GM12878 (cell line): ENCODE measurements at regions of chr20 and their contacts with region 1.

Region 1: GRCh38 chr20:36199345-36200257 is 36.7 kb upstream of the AAR2 start:
- DNase-seq: no peak
- ATAC-seq: peak; percentile 91
- H3K4me3 ChIP-seq: no peak overlapping the region
- H3K27ac ChIP-seq: no peak overlapping the region
- H3K4me1 ChIP-seq: no peaks in the 10 kb centered on the region
- H3K27me3 ChIP-seq: peaks cover 0 to 7% of the 10 kb centered on the region in 2 experiments; a peak in 3 of 4 replicates
- CTCF ChIP-seq: peak; percentile 87 to 94 (median 92)
- EP300 ChIP-seq: no peak
- POLR2A ChIP-seq: no peak
- RAD21 ChIP-seq: peak; percentile 63

Region 2: DNA sequence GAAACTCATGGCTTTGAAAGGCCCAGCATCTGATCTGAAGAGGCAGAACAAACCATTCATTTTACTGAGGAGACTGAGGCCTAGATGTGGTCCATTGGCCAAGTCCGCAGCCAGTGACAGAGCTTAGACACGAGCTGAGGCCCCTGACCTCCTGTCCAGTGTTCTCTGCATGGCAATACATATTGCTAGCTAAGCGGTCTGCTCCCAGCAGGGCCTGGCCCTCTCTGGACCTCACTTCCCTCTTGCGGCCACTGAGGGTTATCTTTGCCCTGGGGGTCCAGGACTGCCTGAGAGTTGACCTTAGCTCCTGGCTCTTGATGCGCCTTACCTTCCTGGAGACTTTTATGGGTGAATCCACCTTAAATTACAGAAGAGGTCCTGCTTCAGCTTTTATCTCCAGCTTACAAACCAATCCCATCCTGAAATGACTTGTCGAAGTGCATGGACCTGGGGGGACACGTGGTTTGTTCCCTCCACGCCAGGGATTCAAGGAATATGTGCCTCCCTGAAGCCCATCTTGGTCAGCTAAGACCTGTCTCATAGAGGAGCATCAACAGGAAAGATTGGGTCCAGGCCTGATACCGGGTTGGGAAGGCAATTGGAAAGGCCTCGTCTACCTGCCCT is 155.6 kb before region 1 on chr20:
- CTCF ChIA-PET with region 1: no interaction called
- POLR2A ChIA-PET with region 1: no interaction called
- RAD21 ChIA-PET with region 1: no interaction called
- SMC1A ChIA-PET with region 1: no interaction called
- in situ Hi-C with region 1: no loop called
- intact Hi-C with region 1: no loop called
- DNase-seq: no peak
- ATAC-seq: no peak
- H3K4me3 ChIP-seq: no peak overlapping the region
- H3K27ac ChIP-seq: no peak overlapping the region
- H3K4me1 ChIP-seq: no peaks in the 10 kb centered on the region
- H3K27me3 ChIP-seq: no peaks in the 10 kb centered on the region
- CTCF ChIP-seq: no peak
- EP300 ChIP-seq: no peak
- POLR2A ChIP-seq: no peak
- RAD21 ChIP-seq: no peak

Region 3: DNA sequence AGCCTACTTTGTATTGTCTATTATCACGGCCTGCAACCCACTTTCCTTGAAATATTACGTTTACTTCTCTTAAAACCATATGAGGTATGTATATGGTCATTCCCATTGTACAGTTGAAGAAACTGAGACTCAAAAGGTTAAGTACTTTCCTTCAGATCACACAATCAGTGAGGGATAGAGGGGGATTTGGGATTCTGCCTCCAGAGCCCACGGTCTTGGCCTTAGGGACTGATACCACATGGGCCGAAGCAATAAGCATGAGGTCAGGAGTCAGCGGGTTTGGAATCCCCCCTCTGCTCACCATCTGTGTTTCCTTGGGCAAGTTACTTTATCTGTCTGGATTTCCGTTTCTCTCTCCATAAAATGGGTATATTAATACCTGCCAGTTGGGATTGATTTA is 64.4 kb before region 1 on chr20:
- CTCF ChIA-PET with region 1: interaction called, 18 read pairs
- POLR2A ChIA-PET with region 1: no interaction called
- RAD21 ChIA-PET with region 1: interaction called, 4 read pairs
- SMC1A ChIA-PET with region 1: interaction called, 4 read pairs
- in situ Hi-C with region 1: no loop called
- intact Hi-C with region 1: no loop called
- DNase-seq: no peak
- ATAC-seq: no peak
- H3K4me3 ChIP-seq: no peak overlapping the region
- H3K27ac ChIP-seq: no peak overlapping the region
- H3K4me1 ChIP-seq: no peaks in the 10 kb centered on the region
- H3K27me3 ChIP-seq: no peaks in the 10 kb centered on the region
- CTCF ChIP-seq: no peak
- EP300 ChIP-seq: no peak
- POLR2A ChIP-seq: no peak
- RAD21 ChIP-seq: no peak

Region 4: DNA sequence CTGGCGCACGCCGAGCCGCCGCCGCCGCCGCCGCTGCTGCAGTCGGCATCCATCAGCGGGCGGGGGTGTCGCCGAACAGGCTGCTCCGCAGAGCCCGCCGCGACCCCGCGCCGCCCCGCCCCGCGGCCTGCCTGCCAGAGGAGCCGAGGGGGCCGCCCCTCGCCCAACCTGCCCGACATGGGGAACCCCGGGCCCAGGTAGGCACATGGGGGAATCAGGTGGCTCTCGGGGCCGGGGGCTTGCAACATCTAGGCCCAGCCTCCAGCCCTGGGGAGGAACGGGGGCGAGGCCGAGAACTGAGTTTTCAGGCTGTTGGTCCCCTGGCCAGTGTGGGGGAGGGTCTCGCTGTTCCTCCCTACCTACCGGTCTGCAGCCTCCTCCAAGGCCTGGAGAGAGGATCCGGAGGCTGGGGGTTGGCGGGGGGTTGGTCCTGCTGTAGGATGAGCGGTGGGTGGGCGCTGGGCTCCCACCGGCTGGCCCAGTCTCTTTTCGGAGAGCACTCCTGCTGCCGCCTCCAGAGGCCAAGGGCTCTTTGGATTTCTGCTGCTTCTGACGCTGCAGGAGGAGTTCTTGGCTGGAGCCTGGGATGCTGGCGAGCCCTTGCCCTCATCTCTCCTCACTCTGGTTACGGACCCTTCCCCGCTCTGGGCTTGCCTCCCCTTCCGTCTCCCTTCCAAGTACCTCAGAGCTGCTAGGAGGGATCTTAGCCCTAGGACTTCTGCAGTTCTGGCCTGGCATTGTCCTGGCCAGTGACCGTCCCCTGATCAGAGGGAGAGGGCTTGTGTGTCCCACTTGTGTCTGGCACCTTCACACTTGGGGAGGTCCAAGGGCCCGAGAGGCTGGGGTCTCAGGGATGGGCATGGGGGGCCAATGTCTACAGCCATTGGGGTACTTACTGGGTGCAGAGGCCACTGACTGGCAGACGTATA is 44.6 kb before region 1 on chr20 and contains the start of gene EPB41L1:
- CTCF ChIA-PET with region 1: interaction called, 114 read pairs
- POLR2A ChIA-PET with region 1: no interaction called
- RAD21 ChIA-PET with region 1: interaction called, 17 read pairs
- SMC1A ChIA-PET with region 1: interaction called, 28 read pairs
- in situ Hi-C with region 1: no loop called
- intact Hi-C with region 1: loop called (anchors 1 kb)
- DNase-seq: no peak
- ATAC-seq: no peak
- H3K4me3 ChIP-seq: no peak within 1 kb of the TSS
- H3K27ac ChIP-seq: no peak within 1 kb of the TSS
- H3K4me1 ChIP-seq: no peaks in the 10 kb centered on the region
- H3K27me3 ChIP-seq: peaks cover 7 to 10% of the 10 kb centered on the region in 2 experiments; a peak in 3 of 4 replicates
- CTCF ChIP-seq: no peak
- EP300 ChIP-seq: no peak
- POLR2A ChIP-seq: no peak
- RAD21 ChIP-seq: no peak
- polyA plus RNA-seq, gene EPB41L1: 0.08 to 0.16 TPM

Region 5: GRCh38 chr20:36184816-36185776 is 14.5 kb before region 1 on chr20:
- CTCF ChIA-PET with region 1: interaction called, 10 read pairs
- POLR2A ChIA-PET with region 1: no interaction called
- RAD21 ChIA-PET with region 1: no interaction called
- SMC1A ChIA-PET with region 1: no interaction called
- in situ Hi-C with region 1: no loop called
- intact Hi-C with region 1: no loop called
- DNase-seq: no peak
- ATAC-seq: no peak
- H3K4me3 ChIP-seq: no peak overlapping the region
- H3K27ac ChIP-seq: no peak overlapping the region
- H3K4me1 ChIP-seq: no peaks in the 10 kb centered on the region
- H3K27me3 ChIP-seq: no peaks in the 10 kb centered on the region; a peak in 1 of 4 replicates
- CTCF ChIP-seq: no peak
- EP300 ChIP-seq: no peak
- POLR2A ChIP-seq: no peak
- RAD21 ChIP-seq: no peak

Region 6: GRCh38 chr20:36235892-36236785 is 36.5 kb after region 1 on chr20 and contains the start of gene AAR2:
- CTCF ChIA-PET with region 1: interaction called, 11 read pairs
- POLR2A ChIA-PET with region 1: no interaction called
- RAD21 ChIA-PET with region 1: no interaction called
- SMC1A ChIA-PET with region 1: interaction called, 3 read pairs
- in situ Hi-C with region 1: no loop called
- intact Hi-C with region 1: no loop called
- DNase-seq: peak; percentile 23
- ATAC-seq: peak; percentile 98
- H3K4me3 ChIP-seq: peak within 1 kb of the TSS; percentile 91
- H3K27ac ChIP-seq: peak within 1 kb of the TSS; percentile 71
- H3K4me1 ChIP-seq: no peaks in the 10 kb centered on the region
- H3K27me3 ChIP-seq: no peaks in the 10 kb centered on the region
- CTCF ChIP-seq: no peak
- EP300 ChIP-seq: peak in 1 of 2 experiments; percentile 27; a peak in 1 of 4 replicates
- POLR2A ChIP-seq: peak; percentile 95
- RAD21 ChIP-seq: no peak
- polyA plus RNA-seq, gene AAR2: 6.5 to 8.7 TPM

Region 7: DNA sequence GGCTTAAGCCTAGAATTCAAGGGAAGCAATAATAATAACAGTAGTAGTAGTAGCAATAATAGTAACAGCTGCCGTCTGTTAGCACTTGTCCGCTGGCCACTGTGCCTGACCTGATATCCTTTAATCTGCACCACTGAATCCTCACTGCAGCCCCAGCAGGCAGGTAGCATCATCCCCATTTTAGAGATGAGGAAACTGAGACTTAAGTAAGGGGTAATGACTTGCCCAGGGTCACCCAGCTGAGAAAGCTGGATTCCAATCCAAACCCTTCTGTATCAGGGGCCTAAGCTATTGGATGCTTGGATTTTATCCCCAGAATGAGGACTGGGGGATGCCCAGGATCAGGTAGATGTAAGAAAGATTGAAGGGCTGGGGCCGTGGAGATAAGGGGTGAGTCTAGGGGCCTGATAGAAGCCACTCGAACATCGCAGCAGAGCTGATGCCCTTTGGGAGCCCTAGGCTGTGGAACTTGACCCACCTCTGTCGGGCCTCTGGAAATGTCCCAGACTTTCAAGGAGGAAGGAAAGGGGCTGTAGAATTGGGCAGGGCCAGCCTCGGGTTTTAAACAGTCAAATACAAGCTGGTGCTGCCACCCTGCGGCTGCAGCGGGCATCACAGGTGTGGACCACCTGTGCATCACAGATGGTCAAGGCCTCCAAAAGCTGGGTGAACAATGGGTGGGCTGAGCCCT is 239.6 kb after region 1 on chr20:
- CTCF ChIA-PET with region 1: interaction called, 45 read pairs
- POLR2A ChIA-PET with region 1: no interaction called
- RAD21 ChIA-PET with region 1: interaction called, 19 read pairs
- SMC1A ChIA-PET with region 1: interaction called, 8 read pairs
- in situ Hi-C with region 1: loop called (anchors 5 kb)
- intact Hi-C with region 1: loop called (anchors 1 kb)
- DNase-seq: no peak
- ATAC-seq: peak; percentile 88
- H3K4me3 ChIP-seq: no peak overlapping the region
- H3K27ac ChIP-seq: no peak overlapping the region
- H3K4me1 ChIP-seq: no peaks in the 10 kb centered on the region
- H3K27me3 ChIP-seq: no peaks in the 10 kb centered on the region
- CTCF ChIP-seq: peak; percentile 89 to 95 (median 89)
- EP300 ChIP-seq: no peak
- POLR2A ChIP-seq: no peak
- RAD21 ChIP-seq: peak; percentile 89